ENCODE measurements at regions of chr12 and their contacts with region 1.

Region 1: DNA sequence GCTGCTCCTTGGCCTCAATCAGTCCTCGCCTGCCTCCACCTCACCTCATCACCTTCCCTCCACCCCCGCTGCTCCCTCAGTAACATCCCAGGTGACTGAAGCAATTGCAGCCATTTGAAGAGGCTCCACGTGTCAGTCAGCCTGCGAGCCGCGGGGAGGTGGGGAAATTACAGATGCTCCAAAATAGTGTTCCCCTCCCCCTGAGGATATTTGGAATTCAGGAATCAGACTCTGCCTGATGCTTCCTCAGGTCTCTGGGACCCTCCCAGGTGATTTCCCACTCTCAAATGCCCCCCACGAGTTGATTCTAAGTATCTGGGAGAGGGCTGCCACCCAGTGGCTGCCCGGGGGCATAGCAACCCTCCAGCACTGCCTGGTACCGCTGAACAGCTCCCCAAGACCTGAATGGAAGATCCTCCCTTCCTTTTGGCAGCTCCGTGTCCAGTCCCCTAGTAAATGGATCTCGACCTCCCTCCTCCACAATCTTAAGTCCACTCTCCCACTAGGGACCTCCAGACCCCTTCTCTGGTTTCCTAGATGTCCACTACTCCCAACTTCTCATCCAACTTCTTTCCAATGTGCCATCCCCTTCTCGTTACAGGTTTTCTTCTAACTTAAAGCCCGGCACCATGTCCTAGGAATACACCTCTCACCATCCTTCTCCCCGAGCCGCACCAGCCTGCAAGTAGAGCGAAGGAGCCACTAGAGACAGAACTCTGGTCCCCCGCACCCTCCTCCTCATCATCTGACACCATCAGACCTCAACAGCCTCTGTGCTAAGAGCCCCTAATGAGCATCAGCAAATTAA is 1.4 kb upstream of the ASIC1 start:
- DNase-seq: peak; percentile 49
- H3K4me3 Mint-ChIP-seq: peak overlapping the region; percentile 89
- H3K27ac Mint-ChIP-seq: peak overlapping the region; percentile 25
- H3K4me1 Mint-ChIP-seq: peaks cover 33% of the 10 kb centered on the region
- H3K27me3 Mint-ChIP-seq: peaks cover 34% of the 10 kb centered on the region

Region 2: DNA sequence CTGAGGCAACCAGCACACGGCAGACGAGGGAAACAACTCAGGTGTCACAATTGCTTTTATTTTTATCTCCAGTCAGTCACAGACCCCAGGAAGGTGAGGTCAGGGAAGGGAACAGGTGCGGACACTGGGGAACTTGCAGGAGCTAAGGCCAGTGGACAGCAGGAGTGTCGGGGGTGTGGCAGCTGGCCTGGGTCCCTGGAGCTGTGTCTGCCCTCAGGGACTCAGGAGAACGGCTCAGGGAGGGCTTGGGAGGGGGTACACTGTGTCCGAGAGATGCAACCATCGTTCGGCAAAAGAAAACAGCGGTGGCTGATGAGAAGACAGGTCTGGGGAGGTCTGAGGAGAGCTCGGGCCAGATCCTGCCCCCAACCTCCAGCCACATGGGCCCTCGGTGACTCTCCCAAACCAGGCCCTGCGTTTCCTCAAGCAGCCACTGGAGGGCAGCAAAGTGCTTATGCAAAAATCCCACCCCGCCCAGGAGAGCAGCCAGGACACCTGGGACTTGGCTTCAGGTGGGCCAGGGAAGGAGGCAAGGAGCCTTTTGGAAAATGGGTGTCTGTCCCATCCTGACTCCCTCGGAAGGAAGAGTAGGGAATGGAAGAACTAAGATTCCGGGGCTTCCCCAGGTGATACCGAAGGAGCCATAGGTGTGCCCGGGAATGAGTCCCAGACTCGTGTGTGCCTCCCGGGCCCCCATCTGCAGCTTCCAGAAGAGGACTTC is 189.0 kb before region 1 on chr12:
- intact Hi-C with region 1: loop called (anchors 1 kb)
- DNase-seq: peak; percentile 59
- H3K4me3 Mint-ChIP-seq: no peak overlapping the region
- H3K27ac Mint-ChIP-seq: no peak overlapping the region
- H3K4me1 Mint-ChIP-seq: no peaks in the 10 kb centered on the region
- H3K27me3 Mint-ChIP-seq: no peaks in the 10 kb centered on the region

Region 3: DNA sequence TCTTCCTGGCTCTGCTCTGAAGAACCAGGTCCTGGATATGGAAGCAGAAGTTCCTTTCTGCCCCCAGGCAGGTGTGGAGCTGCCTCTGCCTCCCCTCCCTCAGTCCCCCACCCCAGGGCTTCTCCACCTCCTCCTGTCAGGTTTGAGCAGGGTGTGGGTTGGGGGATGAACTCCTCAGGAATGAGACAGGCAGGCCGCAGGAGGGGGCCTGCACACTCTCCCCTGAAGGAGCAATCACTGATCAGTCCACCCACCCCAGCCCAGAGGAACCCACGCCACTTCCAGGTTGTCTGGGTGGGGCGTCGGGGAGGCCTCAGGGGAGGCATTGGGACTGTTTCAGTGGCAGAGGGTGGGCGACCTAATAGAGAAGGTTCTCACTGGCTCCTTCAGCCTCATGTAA is 179.0 kb before region 1 on chr12:
- intact Hi-C with region 1: no loop called
- DNase-seq: no peak
- H3K4me3 Mint-ChIP-seq: no peak overlapping the region
- H3K27ac Mint-ChIP-seq: no peak overlapping the region
- H3K4me1 Mint-ChIP-seq: no peaks in the 10 kb centered on the region
- H3K27me3 Mint-ChIP-seq: peaks cover 2% of the 10 kb centered on the region

Region 4: DNA sequence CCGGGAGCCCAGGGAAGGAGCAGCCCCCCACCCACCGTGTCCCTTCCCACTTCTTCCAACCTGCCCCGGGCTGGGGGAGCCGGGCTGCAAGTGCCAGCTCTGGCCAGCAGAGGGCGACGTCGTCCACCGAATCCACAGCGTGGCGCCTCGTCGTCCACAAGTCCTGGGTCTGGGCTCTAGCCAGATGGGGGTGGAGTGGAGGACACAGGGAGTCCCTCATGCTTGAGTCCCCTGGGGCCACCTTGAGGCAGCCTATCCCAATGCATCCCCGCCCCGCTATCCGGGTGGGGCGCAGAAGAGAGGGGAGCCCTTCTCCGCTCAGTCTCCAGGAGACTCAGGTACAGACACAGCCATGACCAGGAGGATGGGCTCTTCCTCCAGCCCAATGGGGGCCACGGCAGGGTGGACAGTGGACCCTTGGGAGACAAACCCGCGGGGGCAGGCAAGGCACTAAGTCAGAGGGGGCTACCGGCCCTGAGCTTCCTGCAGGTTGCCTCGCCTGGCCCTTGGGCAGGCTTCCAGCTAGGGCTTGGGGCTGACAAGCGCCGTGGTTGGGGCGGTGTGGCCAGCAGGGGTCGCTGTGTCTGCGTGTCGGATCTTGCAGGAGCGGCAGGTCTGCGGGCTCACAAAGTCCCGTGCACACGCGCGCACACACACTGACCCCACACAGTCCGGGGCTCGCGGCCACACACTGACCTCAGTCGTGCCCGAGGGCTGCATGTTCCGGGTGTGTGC is 88.8 kb before region 1 on chr12:
- intact Hi-C with region 1: loop called (anchors 1 kb)
- DNase-seq: peak; percentile 86
- H3K4me3 Mint-ChIP-seq: peak overlapping the region; percentile 63
- H3K27ac Mint-ChIP-seq: no peak overlapping the region
- H3K4me1 Mint-ChIP-seq: peaks cover 6% of the 10 kb centered on the region
- H3K27me3 Mint-ChIP-seq: peaks cover 32% of the 10 kb centered on the region

Region 5: GRCh38 chr12:50043854-50044253 is 12.2 kb before region 1 on chr12:
- intact Hi-C with region 1: loop called (anchors 1 kb)
- DNase-seq: no peak
- H3K4me3 Mint-ChIP-seq: no peak overlapping the region
- H3K27ac Mint-ChIP-seq: peak overlapping the region; percentile 79
- H3K4me1 Mint-ChIP-seq: peaks cover 36% of the 10 kb centered on the region
- H3K27me3 Mint-ChIP-seq: peaks cover 2% of the 10 kb centered on the region